Activated CD8-positive, alpha-beta T cell treated with anti-CD3 and anti-CD28 coated beads, Interleukin-2, amount 10 ng/mL, durations not matched to agents 7 days and 5 days (primary cell): ENCODE measurements at regions of chrX and their contacts with region 1.

Region 1: DNA sequence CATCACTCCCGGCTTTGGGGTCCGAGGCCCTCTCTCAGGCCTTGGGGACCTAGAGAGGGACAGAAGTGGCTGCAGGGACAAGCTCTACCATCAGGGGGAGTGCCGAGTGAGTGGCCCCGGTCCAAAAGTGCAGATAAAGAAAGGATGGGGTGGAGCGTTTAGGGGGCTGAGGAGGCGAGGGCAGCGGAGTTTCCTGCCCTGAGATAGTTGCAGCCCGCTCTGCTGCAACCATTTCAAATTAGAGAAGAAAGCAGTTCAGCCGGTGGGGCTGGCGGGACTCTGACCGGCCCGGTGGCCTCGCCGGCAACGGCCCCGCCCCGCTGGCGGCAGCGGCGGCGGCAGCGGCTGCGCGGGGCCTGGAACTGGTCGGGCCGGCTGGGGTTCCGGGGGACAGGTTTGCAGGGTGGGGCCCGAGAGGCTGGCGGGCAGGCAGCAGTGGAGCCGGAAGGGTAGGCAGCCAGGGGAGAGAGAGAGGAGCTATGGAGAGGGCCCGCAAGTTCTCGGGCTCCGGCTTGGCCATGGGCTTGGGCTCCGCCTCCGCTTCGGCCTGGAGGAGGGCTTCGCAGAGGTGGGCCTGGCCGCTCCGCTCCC is 7.6 kb downstream of the DLG3 start:
- DNase-seq: peak; percentile 71
- ATAC-seq: peak; percentile 42
- H3K4me3 Mint-ChIP-seq: peak overlapping the region; percentile 79
- H3K27ac Mint-ChIP-seq: peak overlapping the region; percentile 87
- H3K4me1 Mint-ChIP-seq: peaks cover 43% of the 10 kb centered on the region
- H3K27me3 Mint-ChIP-seq: no peaks in the 10 kb centered on the region

Region 2: DNA sequence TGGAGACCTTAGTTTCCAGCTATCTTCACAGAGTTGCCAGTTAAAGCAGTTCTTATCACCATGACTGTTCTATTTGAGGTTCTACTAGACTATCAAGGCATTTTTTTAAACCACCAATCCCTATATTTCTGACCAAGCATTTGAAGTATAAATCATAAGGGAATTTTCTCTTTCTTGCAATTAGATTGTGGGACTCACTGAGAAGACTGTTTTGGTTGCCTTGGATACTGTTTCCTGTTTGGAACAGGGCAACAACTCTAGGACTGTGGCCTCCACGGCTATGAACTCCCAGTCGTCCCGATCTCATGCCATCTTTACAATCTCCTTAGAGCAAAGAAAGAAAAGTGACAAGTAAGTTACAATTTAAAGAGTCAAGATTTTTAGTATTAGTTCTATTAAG is 150.5 kb before region 1 on chrX:
- CTCF ChIA-PET with region 1: no interaction called
- POLR2A ChIA-PET with region 1: no interaction called
- DNase-seq: no peak
- ATAC-seq: no peak
- H3K4me3 Mint-ChIP-seq: no peak overlapping the region
- H3K27ac Mint-ChIP-seq: no peak overlapping the region
- H3K4me1 Mint-ChIP-seq: no peaks in the 10 kb centered on the region
- H3K27me3 Mint-ChIP-seq: no peaks in the 10 kb centered on the region

Region 3: DNA sequence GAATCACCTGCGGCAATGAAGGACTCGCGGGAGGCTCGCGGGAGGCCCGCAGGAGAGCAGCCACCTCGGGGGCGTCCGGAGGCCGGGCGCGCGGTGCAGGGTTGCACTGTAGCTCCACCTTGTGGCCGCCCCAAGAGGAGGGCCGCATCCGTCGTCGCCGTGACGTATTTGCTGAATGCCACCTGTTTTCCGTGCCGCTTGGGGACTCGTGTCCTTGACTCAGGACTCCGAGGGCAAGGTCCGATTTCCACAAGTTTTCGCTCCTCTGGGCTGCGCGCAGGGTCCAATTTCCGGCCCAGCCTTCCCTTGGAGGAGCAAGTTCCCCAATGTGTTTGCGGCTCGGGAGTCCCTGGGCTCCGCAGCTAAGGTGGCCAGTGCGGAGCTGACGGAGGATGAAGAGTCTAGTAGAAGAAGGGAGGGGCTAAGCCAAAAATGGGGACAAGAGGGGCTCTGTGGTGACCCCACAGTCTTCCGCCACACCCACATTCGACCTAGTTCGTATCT is 18.3 kb before region 1 on chrX:
- CTCF ChIA-PET with region 1: interaction called, 14 read pairs
- POLR2A ChIA-PET with region 1: interaction called, 3 read pairs
- DNase-seq: peak; percentile 84
- ATAC-seq: peak; percentile 85
- H3K4me3 Mint-ChIP-seq: peak overlapping the region; percentile 86
- H3K27ac Mint-ChIP-seq: peak overlapping the region; percentile 89
- H3K4me1 Mint-ChIP-seq: peaks cover 36% of the 10 kb centered on the region
- H3K27me3 Mint-ChIP-seq: peaks cover 5% of the 10 kb centered on the region

Region 4: GRCh38 chrX:70442224-70442623 is 10.0 kb before region 1 on chrX:
- CTCF ChIA-PET with region 1: interaction called, 10 read pairs
- POLR2A ChIA-PET with region 1: no interaction called
- DNase-seq: no peak
- ATAC-seq: no peak
- H3K4me3 Mint-ChIP-seq: no peak overlapping the region
- H3K27ac Mint-ChIP-seq: no peak overlapping the region
- H3K4me1 Mint-ChIP-seq: peaks cover 23% of the 10 kb centered on the region
- H3K27me3 Mint-ChIP-seq: peaks cover 51% of the 10 kb centered on the region

Region 5: GRCh38 chrX:70479922-70480659 is 27.9 kb after region 1 on chrX:
- CTCF ChIA-PET with region 1: no interaction called
- POLR2A ChIA-PET with region 1: no interaction called
- DNase-seq: no peak
- ATAC-seq: no peak
- H3K4me3 Mint-ChIP-seq: no peak overlapping the region
- H3K27ac Mint-ChIP-seq: no peak overlapping the region
- H3K4me1 Mint-ChIP-seq: peaks cover 7% of the 10 kb centered on the region
- H3K27me3 Mint-ChIP-seq: no peaks in the 10 kb centered on the region

Region 6: GRCh38 chrX:70554081-70554480 is 101.8 kb after region 1 on chrX:
- CTCF ChIA-PET with region 1: interaction called, 13 read pairs
- POLR2A ChIA-PET with region 1: no interaction called
- DNase-seq: no peak
- ATAC-seq: no peak
- H3K4me3 Mint-ChIP-seq: no peak overlapping the region
- H3K27ac Mint-ChIP-seq: no peak overlapping the region
- H3K4me1 Mint-ChIP-seq: peaks cover 10% of the 10 kb centered on the region
- H3K27me3 Mint-ChIP-seq: peaks cover 10% of the 10 kb centered on the region